Common myeloid progenitor, CD34-positive (primary cell): ENCODE measurements at regions of chr11 and their contacts with region 1.

Region 1: GRCh38 chr11:66592457-66593302 is at the starts of genes CCDC87 and CCS:
- DNase-seq: peak; percentile 97 to 98 (median 97)
- H3K4me3 ChIP-seq: peak within 1 kb of the TSS; percentile 49 to 96 (median 85)
- H3K27ac ChIP-seq: peak within 1 kb of the TSS; percentile 85 to 88
- H3K4me1 ChIP-seq: peaks cover 8 to 42% (median 35%) of the 10 kb centered on the region in 4 experiments
- H3K27me3 ChIP-seq: no peaks in the 10 kb centered on the region

Region 2: GRCh38 chr11:66609721-66610617 is 17.3 kb after region 1 on chr11:
- CTCF ChIA-PET with region 1: interaction called, 11 read pairs
- POLR2A ChIA-PET with region 1: interaction called, 4 read pairs
- DNase-seq: peak in 2 of 3 donors; percentile 43 to 59
- H3K4me3 ChIP-seq: peak overlapping the region in 1 of 7 experiments; percentile 2
- H3K27ac ChIP-seq: peak overlapping the region in 1 of 2 experiments; percentile 49
- H3K4me1 ChIP-seq: peaks cover 5 to 11% (median 7%) of the 10 kb centered on the region in 4 experiments
- H3K27me3 ChIP-seq: no peaks in the 10 kb centered on the region

Region 3: DNA sequence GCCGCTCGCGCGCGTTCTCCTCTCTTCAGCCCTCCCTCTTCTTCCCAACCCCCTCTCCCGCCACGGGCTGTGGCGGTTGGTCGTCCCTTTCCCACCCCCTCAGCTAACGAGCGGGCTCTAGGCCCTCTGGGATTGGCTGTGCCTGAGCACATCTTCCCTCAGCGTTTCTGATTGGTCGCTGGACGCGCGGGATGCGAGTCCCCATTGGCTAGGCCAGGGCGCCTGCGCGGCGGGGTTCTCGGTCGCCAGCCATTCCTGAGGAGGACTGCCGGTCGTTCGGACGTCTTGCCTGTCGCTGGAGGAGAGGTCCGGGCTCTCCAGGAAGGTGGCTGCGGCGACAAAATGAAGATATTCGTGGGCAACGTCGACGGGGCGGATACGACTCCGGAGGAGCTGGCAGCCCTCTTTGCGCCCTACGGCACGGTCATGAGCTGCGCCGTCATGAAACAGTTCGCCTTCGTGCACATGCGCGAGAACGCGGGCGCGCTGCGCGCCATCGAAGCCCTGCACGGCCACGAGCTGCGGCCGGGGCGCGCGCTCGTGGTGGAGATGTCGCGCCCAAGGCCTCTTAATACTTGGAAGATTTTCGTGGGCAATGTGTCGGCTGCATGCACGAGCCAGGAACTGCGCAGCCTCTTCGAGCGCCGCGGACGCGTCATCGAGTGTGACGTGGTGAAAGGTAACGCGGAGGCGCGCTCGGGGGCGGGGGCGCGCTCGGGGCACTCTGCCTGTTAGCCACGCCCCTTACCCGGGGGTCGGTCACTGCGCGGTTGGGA is 23.9 kb after region 1 on chr11 and contains the start of gene RBM14:
- CTCF ChIA-PET with region 1: interaction called, 15 read pairs
- POLR2A ChIA-PET with region 1: interaction called, 6 read pairs
- DNase-seq: peak; percentile 98 to 99 (median 99)
- H3K4me3 ChIP-seq: peak within 1 kb of the TSS; percentile 90 to 100 (median 96)
- H3K27ac ChIP-seq: peak within 1 kb of the TSS; percentile 93 to 97
- H3K4me1 ChIP-seq: peaks cover 18 to 33% (median 28%) of the 10 kb centered on the region in 4 experiments
- H3K27me3 ChIP-seq: no peaks in the 10 kb centered on the region